Breast epithelium (tissue), 4 donors: ENCODE measurements at regions of chr20 and their contacts with region 1.

Region 1: GRCh38 chr20:9889270-9889981 is 50.5 kb upstream of the PAK5 start:
- DNase-seq: no peak
- H3K4me3 ChIP-seq: no peak overlapping the region
- H3K27ac ChIP-seq: no peak overlapping the region
- H3K4me1 ChIP-seq: no peaks in the 10 kb centered on the region
- H3K27me3 ChIP-seq: no peaks in the 10 kb centered on the region
- CTCF ChIP-seq: no peak
- POLR2A ChIP-seq: no peak

Region 2: GRCh38 chr20:8812817-8813216 is 1076.6 kb before region 1 on chr20:
- intact Hi-C with region 1: no loop called
- DNase-seq: no peak
- H3K4me3 ChIP-seq: no peak overlapping the region
- H3K27ac ChIP-seq: peak overlapping the region; percentile 17 to 78
- H3K4me1 ChIP-seq: no peaks in the 10 kb centered on the region
- H3K27me3 ChIP-seq: no peaks in the 10 kb centered on the region
- CTCF ChIP-seq: no peak
- POLR2A ChIP-seq: no peak

Region 3: DNA sequence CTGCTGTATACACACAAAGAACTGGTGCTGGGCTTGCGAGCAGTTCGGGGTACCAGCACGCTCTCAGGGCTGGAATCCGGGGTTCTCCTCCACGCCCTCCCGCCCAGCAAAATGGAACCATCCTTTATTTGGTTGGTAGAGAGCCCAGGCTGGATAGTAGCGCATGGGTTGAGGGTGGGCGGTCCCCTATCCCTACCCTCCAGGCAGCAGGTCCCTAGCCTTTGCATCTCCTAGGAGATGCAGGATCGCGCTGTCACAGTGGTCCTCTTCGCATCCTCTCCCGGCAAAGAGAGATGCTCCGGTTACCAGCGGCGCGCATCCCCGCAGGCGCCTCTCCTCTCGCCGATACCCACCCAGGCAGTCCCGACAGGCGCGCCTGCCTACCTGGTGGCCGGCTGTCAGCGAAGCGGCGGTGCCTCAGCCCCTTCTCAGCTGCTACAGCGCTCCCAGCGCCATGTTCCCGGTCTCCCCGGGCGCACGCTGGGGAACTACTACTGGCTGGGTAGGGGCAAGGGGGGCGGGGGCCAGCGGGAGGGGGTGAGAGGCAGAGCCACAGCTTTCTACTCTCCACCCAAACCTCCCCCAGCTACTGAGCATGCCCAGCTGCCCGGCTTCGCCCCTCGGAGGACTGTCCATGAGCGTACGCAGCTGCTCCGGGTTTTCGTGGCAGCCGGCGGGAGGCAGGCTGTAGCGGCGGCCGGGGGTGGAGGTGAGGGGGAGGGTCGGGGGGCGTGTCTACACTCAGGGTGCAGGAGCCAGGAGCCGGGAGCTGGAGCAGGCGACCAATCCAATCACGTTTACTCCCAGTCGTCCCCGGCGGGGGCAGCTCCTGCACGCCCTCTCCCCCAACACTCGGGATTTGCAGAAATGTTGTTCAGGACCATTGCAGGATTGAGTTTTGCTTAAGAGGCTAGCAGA is 50.8 kb before region 1 on chr20 and contains the start of gene PAK5:
- intact Hi-C with region 1: loop called (anchors 2 kb)
- DNase-seq: peak in 1 of 2 donors; percentile 57
- H3K4me3 ChIP-seq: peak within 1 kb of the TSS in 2 of 3 donors; percentile 54 to 65
- H3K27ac ChIP-seq: peak within 1 kb of the TSS; percentile 50 to 60
- H3K4me1 ChIP-seq: no peaks in the 10 kb centered on the region
- H3K27me3 ChIP-seq: peaks cover 0 to 38% of the 10 kb centered on the region in 2 donors
- CTCF ChIP-seq: no peak
- POLR2A ChIP-seq: no peak
- total RNA-seq, gene PAK5: 0.66 to 1.3 TPM in 2 of 3 donors, not detected in the other